Activated T-helper 1 cell treated with anti-CD3 and anti-CD28 coated beads, Interleukin-12 subunit alpha, Interleukin-12 subunit beta, Interleukin-2, Interleukin-4 antibody, amounts not matched to agents 30 ng/mL and 10 ng/mL and 1 ng/mL, durations not matched to agents 14 hours and 24 hours and 36 hours (primary cell): ENCODE measurements at regions of chr9 and their contacts with region 1.

Region 1: GRCh38 chr9:77725820-77726219 is 77.7 kb upstream of the GNA14 start:
- DNase-seq: peak; percentile 8
- H3K4me3 Mint-ChIP-seq: peak overlapping the region; percentile 37
- H3K27ac Mint-ChIP-seq: peak overlapping the region; percentile 92
- H3K4me1 Mint-ChIP-seq: peaks cover 41% of the 10 kb centered on the region
- H3K27me3 Mint-ChIP-seq: no peaks in the 10 kb centered on the region

Region 2: GRCh38 chr9:77661566-77662085 is 64.2 kb before region 1 on chr9:
- intact Hi-C with region 1: no loop called
- DNase-seq: no peak
- H3K4me3 Mint-ChIP-seq: no peak overlapping the region
- H3K27ac Mint-ChIP-seq: no peak overlapping the region
- H3K4me1 Mint-ChIP-seq: no peaks in the 10 kb centered on the region
- H3K27me3 Mint-ChIP-seq: peaks cover 2% of the 10 kb centered on the region

Region 3: DNA sequence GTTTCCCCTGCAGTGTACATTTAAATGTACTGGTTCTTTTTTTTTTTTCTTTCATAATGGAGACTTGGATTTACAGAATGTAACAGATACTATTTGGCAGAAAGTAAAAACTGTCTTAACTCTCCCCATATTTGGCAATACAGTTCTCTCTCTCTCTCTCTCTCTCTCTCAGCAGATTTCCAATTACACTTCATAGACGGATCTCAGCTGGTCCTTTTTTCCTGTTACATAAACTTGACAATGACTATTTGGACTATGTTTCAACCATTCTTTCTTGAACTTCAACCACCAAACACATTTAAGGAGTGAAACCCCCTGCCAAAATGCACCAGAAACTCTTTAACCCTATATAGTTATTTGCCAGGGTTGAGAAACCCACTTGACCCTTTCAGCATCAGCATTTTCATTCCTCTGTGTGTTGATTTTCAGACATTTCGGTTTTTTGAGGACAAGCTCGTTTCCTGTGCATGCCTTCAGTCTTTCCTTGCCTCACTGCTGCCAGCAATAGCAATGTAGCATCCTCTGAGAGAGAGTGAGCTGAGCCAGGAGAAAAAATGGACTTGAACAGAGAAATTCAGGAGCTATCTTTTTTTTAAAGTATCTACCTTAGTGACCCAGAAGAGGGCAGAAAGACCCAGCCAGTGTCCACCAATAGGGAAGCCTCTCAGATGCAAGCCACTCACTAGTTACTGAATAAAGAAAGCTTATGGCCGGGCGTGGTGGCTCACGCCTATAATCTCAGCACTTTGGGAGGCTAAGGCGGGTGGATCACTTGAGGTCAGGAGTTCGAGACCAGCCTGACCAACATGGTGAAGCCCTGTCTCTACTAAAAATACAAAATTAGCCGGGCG is 51.7 kb before region 1 on chr9:
- intact Hi-C with region 1: no loop called
- DNase-seq: no peak
- H3K4me3 Mint-ChIP-seq: no peak overlapping the region
- H3K27ac Mint-ChIP-seq: no peak overlapping the region
- H3K4me1 Mint-ChIP-seq: no peaks in the 10 kb centered on the region
- H3K27me3 Mint-ChIP-seq: peaks cover 4% of the 10 kb centered on the region

Region 4: GRCh38 chr9:77714077-77714549 is 11.7 kb before region 1 on chr9:
- intact Hi-C with region 1: loop called (anchors 1 kb)
- DNase-seq: no peak
- H3K4me3 Mint-ChIP-seq: no peak overlapping the region
- H3K27ac Mint-ChIP-seq: no peak overlapping the region
- H3K4me1 Mint-ChIP-seq: peaks cover 20% of the 10 kb centered on the region
- H3K27me3 Mint-ChIP-seq: no peaks in the 10 kb centered on the region

Region 5: GRCh38 chr9:77765781-77766259 is 40.0 kb after region 1 on chr9:
- intact Hi-C with region 1: no loop called
- DNase-seq: no peak
- H3K4me3 Mint-ChIP-seq: no peak overlapping the region
- H3K27ac Mint-ChIP-seq: peak overlapping the region; percentile 24
- H3K4me1 Mint-ChIP-seq: peaks cover 13% of the 10 kb centered on the region
- H3K27me3 Mint-ChIP-seq: no peaks in the 10 kb centered on the region

Region 6: GRCh38 chr9:77779010-77779409 is 53.2 kb after region 1 on chr9:
- intact Hi-C with region 1: loop called (anchors 5 kb)
- DNase-seq: no peak
- H3K4me3 Mint-ChIP-seq: peak overlapping the region; percentile 76
- H3K27ac Mint-ChIP-seq: peak overlapping the region; percentile 85
- H3K4me1 Mint-ChIP-seq: peaks cover 48% of the 10 kb centered on the region
- H3K27me3 Mint-ChIP-seq: no peaks in the 10 kb centered on the region

Region 7: DNA sequence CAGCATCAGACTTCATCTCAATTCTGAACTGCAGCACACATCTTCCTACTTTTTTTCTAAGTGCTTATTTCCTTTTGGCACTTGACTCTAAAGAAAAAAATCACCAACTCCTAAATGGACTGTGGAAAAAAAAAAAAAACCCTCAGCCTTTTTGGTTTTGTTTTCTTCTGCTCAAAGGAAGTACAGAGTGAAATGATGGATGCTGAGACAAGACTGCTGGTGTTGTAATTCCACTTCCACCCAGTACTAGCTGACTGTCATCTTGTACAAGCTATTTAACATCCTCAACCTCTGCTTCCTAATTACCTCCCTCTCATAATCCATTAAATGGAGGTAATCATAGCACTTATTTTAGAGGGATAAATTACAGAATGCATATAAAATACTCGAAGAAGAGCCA is 93.8 kb after region 1 on chr9:
- intact Hi-C with region 1: loop called (anchors 5 kb)
- DNase-seq: no peak
- H3K4me3 Mint-ChIP-seq: no peak overlapping the region
- H3K27ac Mint-ChIP-seq: no peak overlapping the region
- H3K4me1 Mint-ChIP-seq: peaks cover 39% of the 10 kb centered on the region
- H3K27me3 Mint-ChIP-seq: no peaks in the 10 kb centered on the region